Left ventricle myocardium superior (tissue), 1 donor: ENCODE measurements at regions of chr16 and their contacts with region 1.

Region 1: GRCh38 chr16:46555951-46556350 is 65.2 kb downstream of the SHCBP1 start:
- DNase-seq: no peak
- ATAC-seq: no peak

Region 2: DNA sequence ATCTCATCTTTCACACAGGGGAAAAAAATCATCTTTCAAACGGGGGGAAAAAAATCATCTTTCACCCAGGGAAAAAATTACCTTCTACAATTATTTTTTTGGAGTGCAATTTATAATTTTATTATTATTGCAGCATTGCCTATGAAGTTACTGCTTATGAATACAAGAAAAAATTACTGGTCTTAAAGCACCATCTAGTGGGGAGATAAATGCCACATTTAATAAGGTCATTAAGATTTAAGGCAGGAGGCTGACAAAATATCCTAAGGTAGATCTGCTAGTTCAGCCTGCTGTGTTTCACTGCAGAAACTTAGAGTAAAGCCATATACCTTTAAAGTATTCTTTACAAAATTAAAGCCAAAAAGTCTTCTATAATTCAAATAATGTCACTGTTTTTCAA is 51.6 kb after region 1 on chr16:
- intact Hi-C with region 1: loop called (anchors 10 kb)
- DNase-seq: no peak
- ATAC-seq: no peak

Region 3: DNA sequence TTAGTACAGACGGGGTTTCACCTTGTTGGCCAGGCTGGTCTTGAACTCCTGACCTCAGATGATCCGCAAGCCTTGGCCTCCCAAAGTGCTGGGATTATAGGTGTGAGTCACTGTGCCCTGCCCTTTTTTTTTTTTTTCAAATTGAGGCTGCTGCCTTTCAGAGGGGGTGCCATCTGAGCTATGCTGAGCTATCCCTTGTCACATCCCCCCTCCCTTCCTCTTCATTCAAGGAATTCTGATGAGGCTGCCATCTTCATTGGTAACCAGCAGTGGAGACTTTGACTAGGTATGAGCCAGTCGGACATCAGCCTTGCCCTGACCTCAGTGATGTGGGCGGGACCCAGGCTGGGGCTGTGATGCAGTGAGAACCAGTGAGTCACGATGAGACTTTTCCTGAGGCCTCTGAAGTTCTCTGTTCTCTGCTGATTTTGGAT is 303.8 kb after region 1 on chr16:
- intact Hi-C with region 1: no loop called
- DNase-seq: no peak
- ATAC-seq: no peak